ENCODE measurements at regions of chr6 and their contacts with region 1.

Region 1: GRCh38 chr6:111503207-111503606 is 20.2 kb upstream of the REV3L start:
- DNase-seq: no peak
- H3K4me3 ChIP-seq: no peak overlapping the region
- H3K27ac ChIP-seq: no peak overlapping the region
- H3K4me1 ChIP-seq: no peaks in the 10 kb centered on the region
- H3K27me3 ChIP-seq: no peaks in the 10 kb centered on the region
- CTCF ChIP-seq: no peak
- POLR2A ChIP-seq: no peak

Region 2: DNA sequence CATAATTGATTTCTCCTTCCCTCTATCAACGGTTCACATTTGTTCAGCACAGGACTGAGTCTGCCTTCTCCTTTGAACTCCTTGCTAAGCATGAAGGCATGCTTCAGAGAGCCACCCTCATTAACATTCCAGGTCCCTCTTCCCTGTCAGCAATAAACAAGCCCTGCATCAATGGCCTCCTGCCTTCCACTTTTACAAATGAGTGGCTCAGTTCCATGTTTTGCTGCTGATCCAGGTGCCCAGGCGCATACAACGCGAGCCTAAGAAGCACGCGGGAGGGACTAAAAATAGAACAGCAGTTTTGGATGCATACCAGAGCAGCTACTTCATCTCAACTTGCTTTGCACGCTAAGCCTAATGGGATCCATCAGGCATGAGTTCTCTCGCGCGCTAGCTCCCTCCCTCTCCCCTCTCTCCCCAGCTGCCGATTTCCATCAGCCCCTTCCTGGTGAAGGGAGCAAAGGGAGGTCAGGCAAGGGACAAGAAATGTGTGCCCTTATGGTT is 49.1 kb after region 1 on chr6:
- intact Hi-C with region 1: loop called (anchors 5 kb)
- DNase-seq: peak; percentile 72
- H3K4me3 ChIP-seq: no peak overlapping the region
- H3K27ac ChIP-seq: peak overlapping the region; percentile 67 to 68
- H3K4me1 ChIP-seq: peaks cover 6% of the 10 kb centered on the region
- H3K27me3 ChIP-seq: no peaks in the 10 kb centered on the region
- CTCF ChIP-seq: no peak
- POLR2A ChIP-seq: no peak

Region 3: DNA sequence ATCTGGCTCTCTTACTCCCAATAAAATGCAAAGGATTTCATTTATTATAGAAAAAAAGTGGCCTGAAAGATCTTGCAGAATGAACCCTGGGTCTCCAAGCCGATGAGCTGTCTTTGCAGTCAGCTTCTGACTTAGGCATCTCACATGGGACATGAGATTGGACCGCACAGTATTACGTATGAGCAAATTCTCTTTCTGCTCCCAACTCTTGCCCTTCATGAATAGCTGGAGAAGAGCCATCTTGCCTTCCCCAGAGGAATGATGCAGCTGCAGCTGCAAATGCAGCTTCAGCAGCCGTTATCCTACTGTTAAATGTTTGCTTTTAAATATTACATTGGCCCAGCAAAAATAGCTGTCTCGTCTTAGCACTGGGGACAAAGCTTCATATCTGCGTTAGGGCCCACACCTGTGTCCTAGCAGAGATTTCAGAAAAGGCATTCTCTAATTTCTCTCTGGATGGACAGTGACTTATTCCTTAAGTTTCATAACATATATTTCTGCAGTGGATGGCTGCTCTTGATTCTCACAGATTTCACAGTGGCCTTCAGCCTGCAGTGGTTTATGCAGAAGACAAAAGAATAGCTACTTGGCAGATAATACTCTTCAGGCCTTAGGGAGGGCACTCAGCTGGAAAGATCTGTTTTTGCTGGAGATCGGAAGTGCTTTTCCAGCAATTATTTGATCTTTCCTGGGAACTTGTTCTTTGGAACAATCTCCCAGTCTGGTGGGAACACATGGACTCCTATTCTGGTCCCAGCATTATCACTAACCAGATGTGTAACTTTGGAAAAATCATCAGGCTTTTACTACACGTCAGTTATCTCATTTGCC is 240.9 kb after region 1 on chr6:
- intact Hi-C with region 1: no loop called
- DNase-seq: no peak
- H3K4me3 ChIP-seq: no peak overlapping the region
- H3K27ac ChIP-seq: no peak overlapping the region
- H3K4me1 ChIP-seq: no peaks in the 10 kb centered on the region
- H3K27me3 ChIP-seq: no peaks in the 10 kb centered on the region
- CTCF ChIP-seq: no peak
- POLR2A ChIP-seq: no peak

Measured in prostate gland (tissue), 2 donors.